Activated CD8-positive, alpha-beta T cell treated with anti-CD3 and anti-CD28 coated beads, Interleukin-2, amount 10 ng/mL, durations not matched to agents 7 days and 5 days (primary cell): ENCODE measurements at regions of chr17 and their contacts with region 1.

Region 1: GRCh38 chr17:8326511-8327302 is 12.9 kb upstream of the ODF4 start:
- DNase-seq: peak; percentile 44
- ATAC-seq: peak; percentile 85
- H3K4me3 Mint-ChIP-seq: peak overlapping the region; percentile 65
- H3K27ac Mint-ChIP-seq: no peak overlapping the region
- H3K4me1 Mint-ChIP-seq: peaks cover 24% of the 10 kb centered on the region
- H3K27me3 Mint-ChIP-seq: peaks cover 29% of the 10 kb centered on the region

Region 2: GRCh38 chr17:8337802-8338752 is 11.4 kb after region 1 on chr17:
- CTCF ChIA-PET with region 1: interaction called, 11 read pairs
- POLR2A ChIA-PET with region 1: no interaction called
- DNase-seq: no peak
- ATAC-seq: peak; percentile 39
- H3K4me3 Mint-ChIP-seq: no peak overlapping the region
- H3K27ac Mint-ChIP-seq: no peak overlapping the region
- H3K4me1 Mint-ChIP-seq: peaks cover 16% of the 10 kb centered on the region
- H3K27me3 Mint-ChIP-seq: peaks cover 9% of the 10 kb centered on the region